ENCODE measurements at regions of chr15 and their contacts with region 1.

Region 1: DNA sequence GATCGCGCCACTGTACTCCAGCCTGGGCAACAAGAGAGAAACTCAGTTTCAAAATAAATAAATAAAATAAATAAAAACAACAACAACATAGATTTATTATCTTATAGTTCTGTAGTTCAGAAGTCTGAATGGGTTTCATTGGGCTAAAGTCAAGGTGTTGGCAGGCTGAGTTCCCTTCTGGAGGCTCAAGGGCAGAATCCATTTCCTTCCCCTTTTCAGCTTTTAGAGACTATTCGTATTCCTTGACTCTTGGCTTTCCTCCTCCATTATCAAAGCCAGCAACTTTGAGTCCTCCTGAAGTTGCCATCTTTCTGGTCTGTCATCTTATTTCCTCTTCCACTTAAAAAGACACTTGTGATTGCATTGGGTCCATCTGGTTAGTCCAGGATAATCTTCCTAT is 12.1 kb downstream of the BLM start:
- DNase-seq: no peak
- ATAC-seq: no peak
- H3K4me3 ChIP-seq: no peak overlapping the region
- H3K27ac ChIP-seq: no peak overlapping the region
- H3K4me1 ChIP-seq: no peaks in the 10 kb centered on the region; the same call in 1 of the 2 replicates
- H3K27me3 ChIP-seq: no peaks in the 10 kb centered on the region
- CTCF ChIP-seq: no peak
- EP300 ChIP-seq: no peak
- POLR2A ChIP-seq: no peak
- RAD21 ChIP-seq: no peak

Region 2: GRCh38 chr15:90716976-90717821 is 12.1 kb before region 1 on chr15 and contains the start of gene BLM:
- CTCF ChIA-PET with region 1: interaction called, 4 read pairs
- POLR2A ChIA-PET with region 1: interaction called, 5 read pairs
- RAD21 ChIA-PET with region 1: interaction called, 6 read pairs
- SMC1A ChIA-PET with region 1: interaction called, 12 read pairs
- in situ Hi-C with region 1: no loop called
- intact Hi-C with region 1: no loop called
- DNase-seq: peak; percentile 93
- ATAC-seq: peak; percentile 99
- H3K4me3 ChIP-seq: peak within 1 kb of the TSS; percentile 91
- H3K27ac ChIP-seq: peak within 1 kb of the TSS; percentile 94
- H3K4me1 ChIP-seq: peaks cover 15% of the 10 kb centered on the region
- H3K27me3 ChIP-seq: no peaks in the 10 kb centered on the region
- CTCF ChIP-seq: peak in 1 of 3 experiments; percentile 22; a peak in 1 of 6 replicates
- EP300 ChIP-seq: no peak
- POLR2A ChIP-seq: peak; percentile 85
- RAD21 ChIP-seq: no peak
- polyA plus RNA-seq, gene BLM: 25.3 to 28.2 TPM

Measured in GM12878 (cell line).